Sigmoid colon (tissue), 7 donors: ENCODE measurements at regions of chr7 and their contacts with region 1.

Region 1: GRCh38 chr7:25179771-25180591 is 48.3 kb downstream of the NPVF start:
- DNase-seq: peak; percentile 97
- H3K4me3 ChIP-seq: peak overlapping the region; percentile 82 to 95 (median 86)
- H3K27ac ChIP-seq: peak overlapping the region; percentile 81 to 89 (median 83)
- H3K4me1 ChIP-seq: peaks cover 0 to 18% (median 9%) of the 10 kb centered on the region in 4 donors
- H3K27me3 ChIP-seq: no peaks in the 10 kb centered on the region
- CTCF ChIP-seq: peak; percentile 34 to 90 (median 58)
- EP300 ChIP-seq: no peak
- POLR2A ChIP-seq: no peak

Region 2: GRCh38 chr7:25125137-25125946 is 54.6 kb before region 1 on chr7 and contains the start of gene CYCS:
- intact Hi-C with region 1: loop called (anchors 2 kb)
- DNase-seq: peak; percentile 100
- H3K4me3 ChIP-seq: peak within 1 kb of the TSS; percentile 75 to 98 (median 91)
- H3K27ac ChIP-seq: peak within 1 kb of the TSS; percentile 93 to 99 (median 98)
- H3K4me1 ChIP-seq: peaks cover 0 to 21% (median 15%) of the 10 kb centered on the region in 4 donors
- H3K27me3 ChIP-seq: no peaks in the 10 kb centered on the region
- CTCF ChIP-seq: no peak
- EP300 ChIP-seq: peak in 2 of 4 donors; percentile 81 to 99
- POLR2A ChIP-seq: peak; percentile 96 to 98
- total RNA-seq, gene CYCS: 33.2 to 69.2 (median 48.7) TPM

Region 3: GRCh38 chr7:25460433-25460832 is 280.5 kb after region 1 on chr7:
- intact Hi-C with region 1: no loop called
- DNase-seq: no peak
- H3K4me3 ChIP-seq: no peak overlapping the region
- H3K27ac ChIP-seq: no peak overlapping the region
- H3K4me1 ChIP-seq: peaks cover 0 to 19% (median 14%) of the 10 kb centered on the region in 4 donors
- H3K27me3 ChIP-seq: no peaks in the 10 kb centered on the region
- CTCF ChIP-seq: no peak
- EP300 ChIP-seq: no peak
- POLR2A ChIP-seq: no peak